ENCODE measurements at regions of chr6 and their contacts with region 1.

Region 1: DNA sequence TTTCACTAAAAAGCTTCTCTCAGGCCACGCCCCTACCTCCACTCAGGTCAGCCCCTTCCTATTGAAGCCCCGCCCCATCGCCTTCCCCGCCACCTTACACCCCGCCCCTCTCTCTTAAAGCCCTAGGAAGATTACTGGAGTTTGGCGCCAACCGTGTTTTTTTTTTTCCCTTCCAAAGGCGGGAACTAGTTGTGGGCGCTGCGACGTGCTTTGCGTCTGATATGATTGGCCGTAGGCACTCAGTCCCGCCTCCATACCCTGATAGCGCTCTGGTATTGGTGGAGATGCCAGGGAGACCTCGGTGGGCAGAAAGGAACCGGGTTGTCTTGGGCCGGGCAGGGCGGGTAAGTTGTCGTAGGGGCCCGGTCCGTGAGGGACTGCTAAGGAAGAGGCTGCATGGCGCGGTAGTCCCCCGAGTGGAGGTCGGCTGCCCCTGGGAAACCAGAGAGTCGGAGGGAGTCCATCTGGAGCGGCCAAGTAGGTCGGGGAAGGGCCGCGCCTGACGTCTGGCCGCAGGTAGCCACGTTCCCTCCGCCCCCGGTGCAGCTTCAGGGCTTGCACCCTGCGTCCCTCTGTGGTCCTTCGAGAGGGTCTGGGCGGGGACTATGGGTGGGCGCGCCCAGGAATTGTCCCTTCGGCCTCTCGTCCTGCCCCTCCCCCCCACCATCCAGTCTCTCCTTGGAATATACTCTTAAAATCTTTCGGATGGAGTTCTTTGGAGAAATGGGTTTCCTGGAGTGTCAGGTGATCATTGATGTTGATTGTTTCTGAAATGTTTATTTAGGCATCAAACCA is at the start of gene CASP8AP2:
- DNase-seq: peak; percentile 93
- H3K4me3 Mint-ChIP-seq: peak within 1 kb of the TSS; percentile 98
- H3K27ac Mint-ChIP-seq: peak within 1 kb of the TSS; percentile 90
- H3K4me1 Mint-ChIP-seq: peaks cover 13% of the 10 kb centered on the region
- H3K27me3 Mint-ChIP-seq: no peaks in the 10 kb centered on the region
- CTCF ChIP-seq: no peak
- total RNA-seq, gene CASP8AP2: 21.2 and 24.3 TPM in 2 replicates

Region 2: DNA sequence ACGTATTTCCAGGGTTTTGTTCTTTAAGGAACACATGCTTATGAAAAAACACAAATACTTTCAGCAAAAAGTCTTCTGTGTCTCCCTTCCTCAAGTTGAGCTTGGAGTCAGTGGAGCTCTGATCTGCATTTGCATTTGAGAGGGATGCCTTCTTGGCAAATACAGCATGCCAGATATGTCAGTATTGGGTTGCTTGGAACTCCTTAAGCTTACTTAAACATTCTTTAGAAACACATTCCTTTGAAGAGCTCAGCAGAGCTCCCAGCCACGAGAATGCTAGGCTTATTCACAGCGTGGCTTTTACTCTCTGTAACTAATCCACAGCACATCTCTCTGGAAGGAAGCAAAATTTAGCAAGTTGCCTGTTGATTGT is 328.6 kb before region 1 on chr6:
- CTCF ChIA-PET with region 1: no interaction called
- intact Hi-C with region 1: no loop called
- DNase-seq: no peak
- H3K4me3 Mint-ChIP-seq: no peak overlapping the region
- H3K27ac Mint-ChIP-seq: no peak overlapping the region
- H3K4me1 Mint-ChIP-seq: no peaks in the 10 kb centered on the region
- H3K27me3 Mint-ChIP-seq: no peaks in the 10 kb centered on the region
- CTCF ChIP-seq: no peak

Region 3: DNA sequence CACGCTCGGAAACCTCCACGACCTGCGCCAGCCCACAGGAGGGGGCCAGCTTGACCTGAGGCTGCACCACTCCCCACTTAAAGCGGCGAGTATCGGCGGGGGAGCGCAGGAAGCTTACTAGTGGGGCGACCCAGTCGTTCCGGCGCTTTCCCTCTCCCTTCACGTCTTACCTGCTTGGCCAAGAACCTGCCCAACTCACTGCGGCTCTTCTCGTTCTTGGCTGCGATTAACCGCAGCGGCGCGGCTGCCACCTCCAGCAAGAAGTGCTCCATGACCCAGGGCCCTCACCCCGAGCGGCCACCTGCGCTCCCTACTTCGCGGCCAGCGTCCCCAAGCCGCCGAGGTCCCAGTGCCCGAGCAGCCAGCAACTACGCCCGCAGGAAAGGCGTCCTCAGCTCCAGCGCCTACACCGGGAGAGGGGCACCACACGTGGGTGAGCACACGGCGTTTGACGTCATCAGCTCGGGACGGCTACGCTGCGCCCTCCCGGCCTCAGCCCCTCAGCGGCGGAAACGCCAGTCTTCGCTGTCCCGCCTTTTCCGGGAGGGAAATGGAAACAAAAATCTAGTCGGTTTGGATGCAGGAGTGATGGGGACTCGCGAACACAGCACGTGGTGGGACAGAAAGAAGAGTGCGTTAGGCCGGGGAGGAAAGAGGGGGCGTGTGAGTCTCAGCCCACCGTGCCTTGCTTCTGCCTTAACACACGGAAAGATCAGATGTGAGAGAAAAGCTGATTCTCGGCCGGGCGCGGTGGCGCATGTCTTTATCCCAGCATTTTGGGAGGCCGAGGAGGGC is 10.3 kb before region 1 on chr6 and contains the start of gene MDN1:
- CTCF ChIA-PET with region 1: interaction called, 10 read pairs
- intact Hi-C with region 1: no loop called
- DNase-seq: peak; percentile 92
- H3K4me3 Mint-ChIP-seq: peak within 1 kb of the TSS; percentile 82
- H3K27ac Mint-ChIP-seq: peak within 1 kb of the TSS; percentile 87
- H3K4me1 Mint-ChIP-seq: peaks cover 13% of the 10 kb centered on the region
- H3K27me3 Mint-ChIP-seq: no peaks in the 10 kb centered on the region
- CTCF ChIP-seq: no peak
- total RNA-seq, gene MDN1: 50.0 and 54.0 TPM in 2 replicates

Measured in Calu3 (cell line).